ENCODE measurements at regions of chr16 and their contacts with region 1.

Region 1: DNA sequence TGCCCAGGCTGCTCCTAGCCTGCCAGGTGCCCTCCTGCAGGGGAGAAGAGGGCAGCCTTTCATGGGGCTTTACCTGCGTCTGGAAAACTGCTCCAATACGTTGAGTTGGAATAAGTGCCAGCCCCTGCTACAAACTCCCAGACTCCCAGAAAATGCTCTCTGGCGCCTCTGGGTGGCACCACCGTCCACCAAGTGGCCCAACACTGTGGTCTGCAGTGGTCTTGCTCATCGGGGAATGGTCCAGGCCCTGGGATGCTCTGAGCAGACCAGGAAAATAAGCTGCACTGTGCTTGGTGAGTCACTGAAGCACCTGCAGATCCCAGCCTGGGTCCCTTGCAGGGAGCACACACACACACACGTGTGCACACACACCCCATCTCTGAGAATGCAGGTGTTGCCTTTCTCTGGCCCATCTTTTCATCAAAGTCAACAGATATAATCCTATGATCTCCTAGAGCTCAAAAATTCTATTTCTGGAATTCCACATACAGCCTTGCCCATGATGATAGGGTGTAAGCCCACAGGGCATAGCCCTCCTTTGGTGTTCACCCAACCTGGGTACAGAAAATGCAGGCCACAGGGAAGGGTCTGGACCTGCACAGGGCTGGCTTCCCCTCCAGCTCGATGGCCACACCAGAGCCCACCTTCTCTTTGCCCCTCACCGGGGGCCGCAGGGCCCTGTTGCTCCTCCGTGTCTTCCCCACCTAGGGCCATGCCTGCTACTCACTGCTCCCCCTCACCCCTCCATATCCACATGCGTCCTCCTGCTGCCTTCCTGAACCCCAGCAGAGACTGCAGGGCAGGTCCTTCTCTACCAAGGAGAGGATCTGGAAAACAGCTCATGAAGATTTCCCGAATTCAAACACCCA is 20.5 kb downstream of the CDIP1 start:
- DNase-seq: no peak
- H3K4me3 ChIP-seq: no peak overlapping the region
- CTCF ChIP-seq: peak; percentile 59

Region 2: DNA sequence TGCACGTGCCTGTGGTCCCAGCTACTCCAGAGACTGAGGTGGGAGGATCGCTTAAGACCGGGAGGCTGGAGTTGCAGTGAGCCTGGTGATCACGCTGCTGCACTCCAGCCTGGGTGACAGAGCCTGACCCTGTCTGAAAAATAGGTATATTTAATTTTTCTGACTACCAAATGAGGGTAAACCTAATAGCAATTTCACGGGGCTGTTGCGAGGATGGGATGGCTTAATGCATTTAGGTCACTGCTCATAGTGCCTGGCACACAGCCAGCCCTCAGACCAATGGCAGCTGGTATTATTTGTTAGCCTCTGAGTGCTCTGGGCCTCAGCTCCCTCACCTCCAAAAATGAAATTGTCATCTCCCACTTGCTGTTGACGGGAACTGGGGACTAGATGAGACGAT is 26.4 kb after region 1 on chr16:
- CTCF ChIA-PET with region 1: interaction called, 267 read pairs
- POLR2A ChIA-PET with region 1: no interaction called
- DNase-seq: no peak
- H3K4me3 ChIP-seq: no peak overlapping the region
- CTCF ChIP-seq: no peak

Region 3: GRCh38 chr16:4743226-4743897 is 225.3 kb after region 1 on chr16:
- CTCF ChIA-PET with region 1: no interaction called
- POLR2A ChIA-PET with region 1: no interaction called
- DNase-seq: no peak
- H3K4me3 ChIP-seq: no peak overlapping the region
- CTCF ChIP-seq: no peak